Right ventricle myocardium inferior (tissue), 1 donor: ENCODE measurements at regions of chr6 and their contacts with region 1.

Region 1: GRCh38 chr6:81900616-81901015 is 148.1 kb upstream of the TENT5A start:
- DNase-seq: no peak
- ATAC-seq: no peak

Region 2: GRCh38 chr6:81834141-81834681 is 66.4 kb before region 1 on chr6:
- intact Hi-C with region 1: loop called (anchors 2 kb)
- DNase-seq: peak; percentile 68
- ATAC-seq: peak; percentile 97

Region 3: DNA sequence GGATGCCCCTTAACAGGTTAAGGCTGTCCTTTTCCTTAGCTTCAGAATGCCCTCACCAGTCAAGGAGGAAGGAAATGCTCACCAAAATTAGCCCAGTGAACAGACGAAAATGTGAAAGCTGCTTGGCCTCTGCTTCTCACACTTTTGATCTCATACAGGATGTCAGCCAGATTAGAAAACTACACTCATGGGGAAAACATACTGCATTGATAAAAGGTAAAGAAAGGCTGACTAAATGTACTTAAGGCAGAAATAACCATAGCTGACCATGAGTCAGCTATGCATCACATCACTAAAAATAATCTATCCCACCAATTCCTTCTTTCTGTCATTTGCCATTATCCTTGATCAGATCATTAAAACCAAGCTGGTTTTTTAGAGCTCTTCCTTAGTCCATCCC is 50.3 kb after region 1 on chr6:
- intact Hi-C with region 1: no loop called
- DNase-seq: no peak
- ATAC-seq: no peak

Region 4: DNA sequence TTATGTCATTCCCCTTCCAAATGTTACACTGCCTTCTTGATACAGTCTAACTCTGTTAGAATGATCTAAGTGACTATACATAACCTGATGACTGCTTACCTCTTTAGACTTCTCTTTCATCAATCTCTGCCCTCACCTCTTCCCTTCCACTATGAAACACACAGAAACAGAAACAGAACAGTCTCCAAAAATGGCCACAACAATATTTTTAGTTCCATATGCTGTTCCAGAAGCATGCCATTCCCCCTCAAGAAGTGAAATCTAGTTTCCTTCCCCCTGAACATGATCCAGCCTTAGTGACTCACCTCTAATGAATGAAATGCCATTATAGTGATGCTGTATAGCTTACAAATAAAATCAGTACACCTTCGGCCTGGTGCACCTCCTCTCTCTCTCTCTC is 81.2 kb after region 1 on chr6:
- intact Hi-C with region 1: loop called (anchors 5 kb)
- DNase-seq: no peak
- ATAC-seq: no peak

Region 5: DNA sequence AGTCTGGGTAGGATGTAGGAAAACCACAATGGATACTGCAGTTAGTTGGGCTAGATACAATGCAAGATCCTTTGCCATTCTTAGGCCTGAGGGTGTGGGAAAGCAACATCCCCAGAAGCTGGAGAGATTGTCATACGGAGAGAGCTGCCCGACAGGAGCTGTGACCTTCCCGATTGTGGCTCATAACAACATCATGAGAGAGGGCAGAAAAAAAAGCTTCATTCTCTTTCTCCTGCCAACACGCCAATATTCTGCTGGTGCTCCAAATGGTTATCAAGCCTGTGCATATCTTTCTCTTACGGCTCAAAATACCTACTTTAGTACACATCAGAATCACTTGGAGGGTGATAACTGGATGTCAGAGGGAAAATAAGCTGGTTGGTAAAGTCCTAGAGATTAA is 265.9 kb after region 1 on chr6:
- intact Hi-C with region 1: loop called (anchors 5 kb)
- DNase-seq: no peak
- ATAC-seq: peak; percentile 90